ENCODE measurements at regions of chr9 and their contacts with region 1.

Region 1: GRCh38 chr9:109817846-109818472 is 38.0 kb downstream of the PALM2AKAP2 start:
- DNase-seq: peak; percentile 43
- H3K4me3 Mint-ChIP-seq: no peak overlapping the region
- H3K27ac Mint-ChIP-seq: no peak overlapping the region
- H3K4me1 Mint-ChIP-seq: peaks cover under 1% of the 10 kb centered on the region
- H3K27me3 Mint-ChIP-seq: peaks cover 14% of the 10 kb centered on the region

Region 2: GRCh38 chr9:109574068-109574882 is 243.7 kb before region 1 on chr9:
- CTCF ChIA-PET with region 1: interaction called, 26 read pairs
- POLR2A ChIA-PET with region 1: no interaction called
- DNase-seq: no peak
- H3K4me3 Mint-ChIP-seq: no peak overlapping the region
- H3K27ac Mint-ChIP-seq: no peak overlapping the region
- H3K4me1 Mint-ChIP-seq: no peaks in the 10 kb centered on the region
- H3K27me3 Mint-ChIP-seq: peaks cover 15% of the 10 kb centered on the region

Region 3: DNA sequence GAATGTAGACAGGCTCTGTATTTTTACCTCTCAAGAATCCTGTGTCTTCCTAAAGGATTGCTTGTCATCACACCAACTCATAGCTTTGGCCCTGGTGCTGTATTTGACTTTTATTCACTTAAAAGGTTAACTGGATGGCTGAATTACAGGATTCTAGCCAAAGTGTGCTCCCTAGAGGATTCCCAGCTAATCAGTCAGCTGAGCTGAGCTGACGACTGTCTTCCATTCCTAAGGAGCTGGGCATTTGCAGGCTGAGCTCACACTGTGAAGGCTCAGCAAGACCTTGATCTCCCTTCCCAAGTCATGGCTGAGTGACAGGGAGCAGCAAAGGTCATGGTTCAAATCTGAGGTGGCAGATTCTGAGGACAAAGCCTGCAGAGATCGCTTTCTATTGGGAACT is 97.0 kb before region 1 on chr9:
- CTCF ChIA-PET with region 1: no interaction called
- POLR2A ChIA-PET with region 1: no interaction called
- DNase-seq: no peak
- H3K4me3 Mint-ChIP-seq: no peak overlapping the region
- H3K27ac Mint-ChIP-seq: no peak overlapping the region
- H3K4me1 Mint-ChIP-seq: no peaks in the 10 kb centered on the region
- H3K27me3 Mint-ChIP-seq: no peaks in the 10 kb centered on the region

Region 4: GRCh38 chr9:109779711-109780452 is 38.1 kb before region 1 on chr9 and contains the start of gene PALM2AKAP2:
- CTCF ChIA-PET with region 1: no interaction called
- POLR2A ChIA-PET with region 1: no interaction called
- DNase-seq: no peak
- H3K4me3 Mint-ChIP-seq: no peak within 1 kb of the TSS
- H3K27ac Mint-ChIP-seq: no peak within 1 kb of the TSS
- H3K4me1 Mint-ChIP-seq: no peaks in the 10 kb centered on the region
- H3K27me3 Mint-ChIP-seq: peaks cover 45% of the 10 kb centered on the region
- total RNA-seq, gene PALM2AKAP2: not detected

Region 5: DNA sequence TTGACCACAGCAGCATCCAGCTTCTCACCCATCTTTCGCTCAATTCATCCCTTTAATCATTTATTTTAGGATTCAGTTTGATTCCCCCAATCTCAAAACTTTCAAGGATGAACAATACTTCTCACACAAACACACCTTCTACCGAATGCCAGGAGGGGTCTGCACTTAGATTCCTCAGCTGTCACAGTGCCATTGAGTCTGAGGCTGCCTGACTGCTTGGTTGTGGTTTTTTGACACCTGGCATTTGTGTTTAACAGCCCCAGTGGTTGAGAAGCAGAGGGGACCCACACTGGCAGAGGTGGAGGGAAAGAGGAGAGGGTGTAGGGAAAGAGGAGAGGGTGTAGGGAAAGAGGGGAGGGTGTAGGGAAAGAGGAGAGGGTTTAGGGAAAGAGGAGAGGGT is 16.9 kb after region 1 on chr9:
- CTCF ChIA-PET with region 1: no interaction called
- POLR2A ChIA-PET with region 1: no interaction called
- DNase-seq: no peak
- H3K4me3 Mint-ChIP-seq: no peak overlapping the region
- H3K27ac Mint-ChIP-seq: no peak overlapping the region
- H3K4me1 Mint-ChIP-seq: no peaks in the 10 kb centered on the region
- H3K27me3 Mint-ChIP-seq: peaks cover 14% of the 10 kb centered on the region

Region 6: DNA sequence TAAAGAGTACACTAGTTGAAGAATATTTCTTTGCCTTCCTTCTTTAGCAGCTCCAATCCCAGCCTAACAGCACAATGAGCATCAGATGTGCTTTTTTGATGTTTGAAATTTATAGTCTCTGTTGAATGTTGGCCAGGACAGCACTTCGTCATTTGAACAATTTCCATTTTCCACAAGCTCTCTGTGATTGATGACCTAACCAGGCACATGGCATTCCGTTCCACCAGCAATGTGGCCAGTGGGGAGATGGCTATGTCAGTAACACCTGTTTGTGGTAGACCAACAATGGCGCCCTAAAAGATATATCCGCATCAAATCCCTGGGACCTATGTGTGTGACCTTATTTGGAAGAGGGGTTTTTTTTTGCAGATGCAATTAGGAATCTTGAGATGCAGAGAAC is 28.8 kb after region 1 on chr9:
- CTCF ChIA-PET with region 1: no interaction called
- POLR2A ChIA-PET with region 1: no interaction called
- DNase-seq: no peak
- H3K4me3 Mint-ChIP-seq: no peak overlapping the region
- H3K27ac Mint-ChIP-seq: no peak overlapping the region
- H3K4me1 Mint-ChIP-seq: no peaks in the 10 kb centered on the region
- H3K27me3 Mint-ChIP-seq: no peaks in the 10 kb centered on the region

Measured in activated CD4-positive, alpha-beta memory T cell treated with anti-CD3 and anti-CD28 coated beads, Interleukin-2, amount 10 ng/mL, durations not matched to agents 7 days and 5 days (primary cell).